Activated T-helper 1 cell treated with anti-CD3 and anti-CD28 coated beads, Interleukin-12 subunit alpha, Interleukin-12 subunit beta, Interleukin-2, Interleukin-4 antibody, amounts not matched to agents 30 ng/mL and 10 ng/mL and 1 ng/mL, durations not matched to agents 14 hours and 24 hours and 36 hours (primary cell): ENCODE measurements at regions of chr12 and their contacts with region 1.

Region 1: GRCh38 chr12:109899783-109900751 is at the start of gene TCHP:
- DNase-seq: peak; percentile 69
- H3K4me3 Mint-ChIP-seq: peak within 1 kb of the TSS; percentile 95
- H3K27ac Mint-ChIP-seq: peak within 1 kb of the TSS; percentile 94
- H3K4me1 Mint-ChIP-seq: peaks cover 19% of the 10 kb centered on the region
- H3K27me3 Mint-ChIP-seq: no peaks in the 10 kb centered on the region
- total RNA-seq, gene TCHP: 30.4 and 31.1 TPM in 2 replicates

Region 2: DNA sequence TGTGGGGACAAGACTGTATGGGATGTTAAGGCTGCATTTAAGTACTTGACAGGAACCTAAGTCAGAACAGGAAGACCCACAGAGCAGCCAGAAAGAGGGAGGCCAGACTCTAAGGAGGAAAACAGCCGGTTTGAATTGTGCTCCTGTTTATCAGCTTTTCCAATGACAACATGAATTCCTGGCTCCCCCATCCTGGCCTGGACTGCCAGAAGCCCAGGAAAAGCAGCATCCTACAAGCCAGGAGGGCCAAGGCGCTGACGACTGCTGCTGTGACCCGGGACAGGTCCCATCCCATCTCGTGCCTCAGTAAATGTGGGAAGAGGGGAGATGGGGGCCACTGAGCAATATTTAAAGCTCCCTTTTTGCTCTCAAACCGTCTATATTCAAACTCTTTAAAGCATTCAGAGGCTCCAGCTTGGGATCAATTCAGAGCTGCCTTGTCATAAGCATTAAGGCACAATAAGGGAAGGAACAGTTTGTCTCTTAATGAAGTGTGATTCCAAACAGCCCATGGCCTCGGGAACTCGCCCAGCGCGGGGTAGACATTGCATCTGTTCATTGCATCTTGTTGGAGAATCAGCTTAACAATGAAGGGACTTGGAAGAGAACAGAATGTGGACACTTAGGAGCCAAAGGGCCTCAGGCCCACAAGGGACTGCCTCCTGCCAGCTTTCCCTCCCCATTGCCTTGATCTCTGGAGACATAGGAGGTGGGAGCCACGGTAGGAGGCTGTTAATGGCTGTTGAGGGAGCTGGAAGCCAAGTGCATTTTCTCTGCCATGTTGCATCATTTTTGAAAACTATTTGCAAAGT is 1610.5 kb before region 1 on chr12:
- intact Hi-C with region 1: no loop called
- DNase-seq: no peak
- H3K4me3 Mint-ChIP-seq: no peak overlapping the region
- H3K27ac Mint-ChIP-seq: no peak overlapping the region
- H3K4me1 Mint-ChIP-seq: no peaks in the 10 kb centered on the region
- H3K27me3 Mint-ChIP-seq: peaks cover 2% of the 10 kb centered on the region

Region 3: GRCh38 chr12:109888179-109889020 is 11.7 kb before region 1 on chr12:
- intact Hi-C with region 1: loop called (anchors 1 kb)
- DNase-seq: no peak
- H3K4me3 Mint-ChIP-seq: peak overlapping the region; percentile 55
- H3K27ac Mint-ChIP-seq: peak overlapping the region; percentile 89
- H3K4me1 Mint-ChIP-seq: peaks cover 43% of the 10 kb centered on the region
- H3K27me3 Mint-ChIP-seq: peaks cover 9% of the 10 kb centered on the region

Region 4: GRCh38 chr12:110141389-110141788 is 241.3 kb after region 1 on chr12:
- intact Hi-C with region 1: no loop called
- DNase-seq: no peak
- H3K4me3 Mint-ChIP-seq: no peak overlapping the region
- H3K27ac Mint-ChIP-seq: no peak overlapping the region
- H3K4me1 Mint-ChIP-seq: no peaks in the 10 kb centered on the region
- H3K27me3 Mint-ChIP-seq: no peaks in the 10 kb centered on the region